ENCODE measurements at regions of chr12 and their contacts with region 1.

Region 1: DNA sequence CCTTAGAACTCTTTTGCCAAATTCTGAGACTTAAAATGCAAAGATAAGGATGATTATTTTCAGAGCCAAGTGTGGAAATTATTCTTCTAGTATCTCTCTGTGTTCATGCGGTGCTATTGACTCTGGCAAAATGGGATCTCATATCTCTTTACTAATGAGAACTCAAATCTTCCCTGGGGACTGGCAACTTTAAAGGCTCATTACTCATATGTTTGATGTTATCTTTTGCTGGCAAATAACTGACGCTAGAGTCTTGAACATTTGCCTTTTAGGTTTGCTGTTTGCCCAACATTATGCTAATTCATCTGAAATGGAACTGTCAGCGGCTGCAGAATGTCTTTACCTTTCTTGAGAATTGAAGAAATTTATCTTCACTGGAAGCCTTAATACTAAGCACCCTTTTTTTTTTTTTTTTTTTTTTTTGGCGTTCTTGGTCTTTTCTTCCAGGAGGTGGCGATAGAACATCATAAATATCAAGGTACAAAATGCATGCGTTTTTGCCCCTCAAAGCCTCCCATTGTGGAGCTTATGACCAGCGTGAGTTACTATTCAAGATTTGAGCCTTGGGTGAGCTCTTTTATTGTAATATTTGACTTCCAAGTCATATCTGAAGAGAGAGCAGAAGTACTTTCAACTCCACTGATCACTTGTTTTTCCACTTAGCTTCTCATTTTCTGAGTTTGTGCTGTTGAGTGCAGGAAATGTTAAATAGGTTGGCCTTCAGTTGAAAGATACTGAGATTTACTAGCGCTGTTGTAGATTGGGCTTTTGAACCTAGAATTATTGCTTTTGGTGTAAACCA is 86.6 kb downstream of the CAND1 start:
- DNase-seq: no peak
- ATAC-seq: peak; percentile 66
- H3K4me3 Mint-ChIP-seq: no peak overlapping the region
- H3K27ac Mint-ChIP-seq: no peak overlapping the region
- H3K4me1 Mint-ChIP-seq: peaks cover 22% of the 10 kb centered on the region
- H3K27me3 Mint-ChIP-seq: no peaks in the 10 kb centered on the region
- CTCF ChIP-seq: 0 out of 2 replicates have a peak, but pooled peaks have one; percentile 16

Region 2: GRCh38 chr12:67155863-67156262 is 199.9 kb before region 1 on chr12:
- CTCF ChIA-PET with region 1: no interaction called
- POLR2A ChIA-PET with region 1: no interaction called
- DNase-seq: no peak
- ATAC-seq: no peak
- H3K4me3 Mint-ChIP-seq: no peak overlapping the region
- H3K27ac Mint-ChIP-seq: no peak overlapping the region
- H3K4me1 Mint-ChIP-seq: no peaks in the 10 kb centered on the region
- H3K27me3 Mint-ChIP-seq: no peaks in the 10 kb centered on the region
- CTCF ChIP-seq: no peak

Region 3: DNA sequence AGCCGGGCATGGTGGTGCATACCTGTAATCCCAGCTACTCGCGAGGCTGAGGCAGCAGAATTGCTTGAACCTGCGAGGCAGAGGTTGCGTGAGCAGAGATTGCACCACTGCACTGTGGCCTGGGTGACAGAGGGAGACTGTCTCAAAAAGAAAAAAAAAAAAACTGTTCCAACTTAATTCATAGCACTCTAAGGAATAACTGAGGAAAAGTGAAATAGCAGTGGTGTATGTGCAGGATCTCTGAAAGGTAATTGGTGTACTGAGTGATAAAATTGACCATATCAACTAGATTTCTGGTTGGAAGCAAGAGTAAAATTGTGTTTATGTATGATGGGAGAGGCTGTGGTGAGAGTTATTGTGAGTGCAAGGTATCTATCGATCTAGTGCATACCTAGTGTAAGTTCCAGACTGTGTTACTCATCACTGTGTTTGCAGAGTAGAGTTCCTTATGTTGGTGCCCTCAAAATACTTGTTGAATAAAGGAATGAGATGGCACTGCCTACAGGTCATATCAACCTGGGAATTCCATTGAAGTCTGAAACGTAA is 80.3 kb before region 1 on chr12:
- CTCF ChIA-PET with region 1: no interaction called
- POLR2A ChIA-PET with region 1: no interaction called
- DNase-seq: no peak
- ATAC-seq: no peak
- H3K4me3 Mint-ChIP-seq: no peak overlapping the region
- H3K27ac Mint-ChIP-seq: peak overlapping the region; percentile 29; the same call in 1 of the 2 replicates
- H3K4me1 Mint-ChIP-seq: peaks cover 59% of the 10 kb centered on the region
- H3K27me3 Mint-ChIP-seq: no peaks in the 10 kb centered on the region
- CTCF ChIP-seq: no peak

Region 4: GRCh38 chr12:67370979-67371378 is 15.2 kb after region 1 on chr12:
- CTCF ChIA-PET with region 1: interaction called, 12 read pairs
- POLR2A ChIA-PET with region 1: interaction called, 3 read pairs
- DNase-seq: no peak
- ATAC-seq: no peak
- H3K4me3 Mint-ChIP-seq: no peak overlapping the region
- H3K27ac Mint-ChIP-seq: no peak overlapping the region
- H3K4me1 Mint-ChIP-seq: no peaks in the 10 kb centered on the region
- H3K27me3 Mint-ChIP-seq: no peaks in the 10 kb centered on the region
- CTCF ChIP-seq: no peak

Region 5: GRCh38 chr12:67419810-67420209 is 64.0 kb after region 1 on chr12:
- CTCF ChIA-PET with region 1: interaction called, 84 read pairs
- POLR2A ChIA-PET with region 1: no interaction called
- DNase-seq: no peak
- ATAC-seq: peak; percentile 57
- H3K4me3 Mint-ChIP-seq: no peak overlapping the region
- H3K27ac Mint-ChIP-seq: no peak overlapping the region
- H3K4me1 Mint-ChIP-seq: peaks cover 26% of the 10 kb centered on the region
- H3K27me3 Mint-ChIP-seq: no peaks in the 10 kb centered on the region; the same call in 1 of the 2 replicates
- CTCF ChIP-seq: no peak

Region 6: DNA sequence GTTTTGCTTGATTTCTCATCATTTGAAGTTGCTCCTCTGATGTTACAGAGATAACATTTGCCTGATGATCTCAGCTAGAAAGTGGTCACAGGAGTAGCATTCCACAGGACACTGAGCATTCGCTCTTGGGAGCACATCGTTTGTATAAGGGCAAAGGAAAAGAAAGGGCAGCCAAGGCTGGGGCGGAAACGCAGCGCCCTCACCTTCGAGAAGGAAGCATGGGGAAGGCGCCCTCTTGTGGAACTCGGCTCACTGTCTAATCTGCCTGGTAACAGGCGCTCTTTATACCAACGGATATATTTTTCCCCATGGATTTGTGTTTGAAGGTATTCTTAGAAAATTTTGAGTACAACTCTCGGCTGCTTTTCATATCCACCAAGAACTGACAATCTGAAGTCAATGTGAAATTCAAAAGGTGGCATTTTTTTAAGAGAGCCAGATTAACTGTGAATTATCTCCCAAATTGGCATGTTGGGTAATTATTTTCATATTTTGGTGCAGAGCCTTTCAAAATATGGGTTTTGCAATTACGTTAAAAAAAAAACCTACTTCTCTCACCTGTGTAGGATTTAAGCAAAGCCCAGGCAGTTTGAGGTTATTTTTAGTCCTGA is 86.1 kb after region 1 on chr12:
- CTCF ChIA-PET with region 1: interaction called, 47 read pairs
- POLR2A ChIA-PET with region 1: no interaction called
- DNase-seq: peak; percentile 84
- ATAC-seq: peak; percentile 98
- H3K4me3 Mint-ChIP-seq: no peak overlapping the region
- H3K27ac Mint-ChIP-seq: 0 out of 2 replicates have a peak overlapping the region, but pooled peaks have one; percentile 64
- H3K4me1 Mint-ChIP-seq: peaks cover 22% of the 10 kb centered on the region
- H3K27me3 Mint-ChIP-seq: no peaks in the 10 kb centered on the region; the same call in 1 of the 2 replicates
- CTCF ChIP-seq: peak; percentile 63

Region 7: GRCh38 chr12:67943226-67943892 is 587.6 kb after region 1 on chr12:
- CTCF ChIA-PET with region 1: interaction called, 29 read pairs
- POLR2A ChIA-PET with region 1: no interaction called
- DNase-seq: peak; percentile 42
- ATAC-seq: peak; percentile 88
- H3K4me3 Mint-ChIP-seq: no peak overlapping the region
- H3K27ac Mint-ChIP-seq: no peak overlapping the region; the same call in 1 of the 2 replicates
- H3K4me1 Mint-ChIP-seq: peaks cover 27% of the 10 kb centered on the region
- H3K27me3 Mint-ChIP-seq: no peaks in the 10 kb centered on the region
- CTCF ChIP-seq: peak; percentile 42; the same call in 1 of the 2 replicates